ENCODE measurements at regions of chr12 and their contacts with region 1.

Region 1: DNA sequence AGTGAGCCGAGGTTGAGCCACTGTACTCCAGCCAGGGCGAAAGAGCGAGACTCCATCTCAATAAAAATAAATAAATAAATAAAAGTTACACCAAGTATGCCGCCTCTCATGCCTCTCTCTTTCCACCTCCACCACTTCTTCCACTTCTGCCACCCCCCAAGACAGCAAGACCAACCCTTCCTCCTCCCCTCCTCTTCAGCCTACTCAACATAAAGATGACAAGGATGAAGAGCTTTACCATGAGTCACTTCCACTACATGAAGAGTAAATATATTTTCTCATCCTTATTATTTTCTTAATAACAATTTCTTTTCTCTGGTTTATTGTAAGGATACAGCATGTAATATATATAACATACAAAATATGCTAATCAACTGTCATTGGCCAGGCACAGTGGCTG is 3.6 kb upstream of the TMED2 start:
- DNase-seq: no peak
- ATAC-seq: no peak
- H3K4me3 ChIP-seq: no peak overlapping the region
- H3K4me3 Mint-ChIP-seq: no peak overlapping the region
- H3K27ac ChIP-seq: no peak overlapping the region
- H3K27ac Mint-ChIP-seq: no peak overlapping the region
- H3K4me1 ChIP-seq: peaks cover 23% of the 10 kb centered on the region
- H3K4me1 Mint-ChIP-seq: peaks cover 18 to 20% of the 10 kb centered on the region in 2 donors
- H3K27me3 ChIP-seq: no peaks in the 10 kb centered on the region
- H3K27me3 Mint-ChIP-seq: no peaks in the 10 kb centered on the region
- CTCF ChIP-seq: no peak

Region 2: DNA sequence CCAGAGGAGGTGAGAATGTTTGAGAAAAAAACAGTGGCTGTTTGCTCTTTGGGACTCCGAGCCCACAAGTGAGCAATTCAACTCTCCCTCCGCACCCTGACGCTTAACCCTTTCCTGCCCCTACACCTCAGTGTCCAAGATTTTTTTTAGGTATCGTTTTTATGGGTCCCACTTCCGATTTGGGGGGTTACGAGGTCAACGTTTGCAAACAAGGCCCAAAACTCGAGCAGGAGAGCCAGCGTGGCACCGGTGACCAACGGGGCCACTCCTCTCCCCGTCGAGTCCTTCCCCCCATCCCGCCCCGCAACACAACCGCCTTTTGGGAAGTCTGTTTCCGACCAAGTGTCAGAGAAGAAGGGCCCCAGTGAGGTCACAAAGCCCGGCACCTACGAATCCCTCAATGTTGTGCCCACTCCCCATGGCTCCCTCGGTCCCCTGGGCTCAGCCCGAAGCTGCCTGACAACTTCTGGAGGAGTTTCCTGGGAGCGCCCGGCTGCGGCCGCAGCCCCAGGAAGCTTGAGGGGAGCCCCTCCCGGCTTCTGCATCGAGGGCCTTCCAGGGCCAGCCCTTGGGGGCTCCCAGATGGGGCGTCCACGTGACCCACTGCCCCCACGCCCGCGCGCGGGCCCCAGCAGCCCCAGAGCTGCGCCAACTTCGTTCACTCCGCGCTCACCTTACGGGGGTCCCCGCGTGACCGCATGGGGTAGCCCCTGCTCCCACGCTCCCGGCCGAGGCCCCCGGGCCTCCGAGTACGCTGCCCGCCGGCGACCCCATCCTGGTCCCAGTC is 310.4 kb before region 1 on chr12:
- intact Hi-C with region 1: loop called (anchors 5 kb)
- DNase-seq: peak in 1 of 2 donors; percentile 40
- ATAC-seq: no peak
- H3K4me3 ChIP-seq: peak overlapping the region; percentile 36
- H3K4me3 Mint-ChIP-seq: peak overlapping the region; percentile 78
- H3K27ac ChIP-seq: no peak overlapping the region
- H3K27ac Mint-ChIP-seq: peak overlapping the region in 1 of 2 donors; percentile 71
- H3K4me1 ChIP-seq: peaks cover 35% of the 10 kb centered on the region
- H3K4me1 Mint-ChIP-seq: peaks cover 5 to 36% of the 10 kb centered on the region in 2 donors
- H3K27me3 ChIP-seq: no peaks in the 10 kb centered on the region
- H3K27me3 Mint-ChIP-seq: no peaks in the 10 kb centered on the region
- CTCF ChIP-seq: no peak

Region 3: DNA sequence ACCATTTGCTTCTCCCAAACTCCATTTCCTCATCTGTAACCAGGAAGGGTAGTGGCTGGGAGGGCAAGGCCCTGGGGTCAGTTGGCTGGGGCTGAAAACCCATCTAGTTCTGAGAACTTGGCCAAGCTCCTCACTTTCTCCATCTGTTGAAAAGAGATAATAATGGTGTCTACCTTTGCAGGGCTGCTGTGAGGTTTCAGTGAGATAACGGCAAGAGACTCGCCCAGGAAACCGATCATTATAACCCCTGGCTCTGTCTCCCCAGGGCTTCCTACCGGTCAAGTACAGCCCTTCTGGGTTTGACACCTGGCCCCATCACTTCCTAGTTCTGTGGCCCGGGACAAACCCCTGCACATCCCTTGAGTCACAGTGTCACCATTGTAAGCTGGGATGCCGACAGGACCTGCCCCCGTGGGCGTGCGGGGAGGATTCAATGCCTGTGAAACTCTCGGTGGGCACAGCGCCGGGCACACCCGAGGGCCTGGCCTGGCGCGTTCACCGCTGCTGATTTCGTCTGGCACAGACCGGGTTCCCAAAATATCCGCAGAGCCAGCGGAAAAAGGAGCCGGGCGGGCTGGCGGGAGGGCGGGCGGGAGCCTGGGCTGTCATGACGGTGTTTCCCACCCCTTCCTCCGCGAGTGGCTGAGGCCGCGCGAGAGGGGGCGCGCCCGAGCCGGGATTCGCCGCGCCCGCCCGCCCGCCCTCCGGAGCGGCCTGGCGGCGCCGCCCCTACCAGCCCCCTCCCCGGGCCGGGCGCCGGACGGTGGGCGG is 192.4 kb before region 1 on chr12:
- intact Hi-C with region 1: loop called (anchors 5 kb)
- DNase-seq: peak; percentile 68 to 86
- ATAC-seq: peak; percentile 64 to 79 (median 71)
- H3K4me3 ChIP-seq: peak overlapping the region; percentile 77
- H3K4me3 Mint-ChIP-seq: peak overlapping the region; percentile 85
- H3K27ac ChIP-seq: peak overlapping the region; percentile 88
- H3K27ac Mint-ChIP-seq: peak overlapping the region; percentile 80 to 82
- H3K4me1 ChIP-seq: peaks cover 50% of the 10 kb centered on the region
- H3K4me1 Mint-ChIP-seq: peaks cover 36 to 46% of the 10 kb centered on the region in 2 donors
- H3K27me3 ChIP-seq: no peaks in the 10 kb centered on the region
- H3K27me3 Mint-ChIP-seq: no peaks in the 10 kb centered on the region
- CTCF ChIP-seq: no peak

Region 4: DNA sequence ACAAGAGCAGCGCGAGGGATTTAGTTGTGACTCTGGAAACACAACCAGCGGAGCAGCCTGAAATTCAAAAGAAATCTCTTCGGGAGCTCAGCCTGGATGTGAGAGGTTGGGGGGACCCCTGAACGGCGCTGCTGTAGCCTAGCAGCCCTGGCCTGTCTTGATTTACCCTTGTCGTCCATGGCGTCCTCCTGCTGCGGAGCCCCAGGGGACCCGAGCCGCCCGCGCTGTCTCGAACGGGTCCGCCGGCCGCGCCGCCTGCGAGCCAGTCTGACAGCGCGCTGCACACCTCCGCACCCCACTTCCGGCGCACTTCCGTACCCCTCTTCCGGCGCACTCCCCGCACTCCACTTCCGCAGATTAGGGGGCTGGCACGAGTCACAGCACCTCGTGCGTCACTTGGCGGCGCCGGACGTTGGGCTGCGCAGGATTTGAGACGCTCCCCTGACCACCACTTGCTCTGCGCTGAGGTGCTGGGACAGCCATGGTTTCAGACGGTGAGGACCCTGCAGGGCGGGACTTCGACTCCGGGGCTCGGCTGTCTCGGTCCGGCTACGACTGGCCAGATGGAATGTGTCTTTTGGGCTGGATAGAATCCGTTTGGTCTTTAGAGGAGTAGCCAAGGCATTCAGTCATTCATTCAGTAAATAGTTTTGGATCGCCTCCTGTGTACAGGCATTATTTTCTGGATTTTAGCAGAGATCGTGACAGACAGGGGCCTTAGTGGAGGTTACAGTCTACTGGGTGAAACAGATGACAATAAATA is 52.8 kb after region 1 on chr12 and contains the starts of genes EIF2B1 and GTF2H3:
- intact Hi-C with region 1: loop called (anchors 1 kb)
- DNase-seq: peak; percentile 96 to 98
- ATAC-seq: peak; percentile 93 to 98 (median 98)
- H3K4me3 ChIP-seq: peak within 1 kb of the TSS; percentile 97
- H3K4me3 Mint-ChIP-seq: peak within 1 kb of the TSS; percentile 97
- H3K27ac ChIP-seq: peak within 1 kb of the TSS; percentile 88
- H3K27ac Mint-ChIP-seq: peak within 1 kb of the TSS; percentile 98
- H3K4me1 ChIP-seq: peaks cover 20% of the 10 kb centered on the region
- H3K4me1 Mint-ChIP-seq: peaks cover 26 to 28% of the 10 kb centered on the region in 2 donors
- H3K27me3 ChIP-seq: no peaks in the 10 kb centered on the region
- H3K27me3 Mint-ChIP-seq: no peaks in the 10 kb centered on the region
- CTCF ChIP-seq: no peak
- total RNA-seq, gene EIF2B1: 50.5 to 55.7 (median 51.0) TPM
- total RNA-seq, gene GTF2H3: 12.8 to 21.3 (median 21.2) TPM

Region 5: GRCh38 chr12:124174451-124175348 is 593.9 kb after region 1 on chr12:
- intact Hi-C with region 1: no loop called
- DNase-seq: no peak
- ATAC-seq: no peak
- H3K4me3 ChIP-seq: no peak overlapping the region
- H3K4me3 Mint-ChIP-seq: no peak overlapping the region
- H3K27ac ChIP-seq: no peak overlapping the region
- H3K27ac Mint-ChIP-seq: no peak overlapping the region
- H3K4me1 ChIP-seq: no peaks in the 10 kb centered on the region
- H3K4me1 Mint-ChIP-seq: no peaks in the 10 kb centered on the region
- H3K27me3 ChIP-seq: no peaks in the 10 kb centered on the region
- H3K27me3 Mint-ChIP-seq: peaks cover 6 to 51% of the 10 kb centered on the region in 2 donors
- CTCF ChIP-seq: no peak